MCF 10A (cell line): ENCODE measurements at regions of chr19 and their contacts with region 1.

Region 1: GRCh38 chr19:14890643-14891379 is 4.9 kb upstream of the OR7A17 start:
- DNase-seq: no peak
- H3K4me3 Mint-ChIP-seq: no peak overlapping the region
- H3K27ac Mint-ChIP-seq: no peak overlapping the region
- H3K4me1 Mint-ChIP-seq: peaks cover 8% of the 10 kb centered on the region
- H3K27me3 Mint-ChIP-seq: peaks cover 34% of the 10 kb centered on the region
- CTCF ChIP-seq: no peak

Region 2: GRCh38 chr19:14689598-14690503 is 201.0 kb before region 1 on chr19 and contains the start of gene ZNF333:
- CTCF ChIA-PET with region 1: no interaction called
- POLR2A ChIA-PET with region 1: no interaction called
- intact Hi-C with region 1: loop called (anchors 10 kb)
- DNase-seq: peak; percentile 89
- H3K4me3 Mint-ChIP-seq: peak within 1 kb of the TSS; percentile 94
- H3K27ac Mint-ChIP-seq: peak within 1 kb of the TSS; percentile 99
- H3K4me1 Mint-ChIP-seq: no peaks in the 10 kb centered on the region
- H3K27me3 Mint-ChIP-seq: no peaks in the 10 kb centered on the region
- CTCF ChIP-seq: no peak
- total RNA-seq, gene ZNF333: 15.4 and 17.5 TPM in 2 replicates

Region 3: DNA sequence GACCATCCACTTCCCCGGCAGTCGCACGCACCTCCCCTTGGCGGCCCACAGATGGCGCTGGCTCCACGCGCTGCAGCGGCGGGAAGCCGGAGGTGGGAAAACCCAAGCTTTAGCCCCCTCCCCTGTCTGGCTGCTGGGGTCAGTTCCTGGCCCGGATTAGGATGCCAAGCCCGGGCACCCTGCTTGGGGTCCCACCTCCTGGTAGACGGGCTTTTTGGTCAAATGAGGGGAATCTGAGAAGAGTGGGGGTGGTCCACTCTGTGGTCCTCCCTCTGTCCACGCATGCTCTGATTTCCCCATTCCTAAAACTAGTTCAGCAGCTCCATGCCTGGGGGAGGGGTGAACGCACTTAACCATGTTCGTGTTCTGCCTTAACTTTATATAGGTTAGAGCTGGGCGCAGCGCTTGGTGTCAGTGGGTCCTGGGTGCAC is 104.4 kb before region 1 on chr19:
- CTCF ChIA-PET with region 1: interaction called, 20 read pairs
- POLR2A ChIA-PET with region 1: no interaction called
- intact Hi-C with region 1: loop called (anchors 1 kb)
- DNase-seq: peak; percentile 43
- H3K4me3 Mint-ChIP-seq: no peak overlapping the region
- H3K27ac Mint-ChIP-seq: no peak overlapping the region
- H3K4me1 Mint-ChIP-seq: peaks cover 12% of the 10 kb centered on the region
- H3K27me3 Mint-ChIP-seq: no peaks in the 10 kb centered on the region
- CTCF ChIP-seq: peak; percentile 92

Region 4: GRCh38 chr19:14871619-14872230 is 19.1 kb before region 1 on chr19:
- CTCF ChIA-PET with region 1: interaction called, 6 read pairs
- POLR2A ChIA-PET with region 1: no interaction called
- intact Hi-C with region 1: loop called (anchors 1 kb)
- DNase-seq: peak; percentile 20
- H3K4me3 Mint-ChIP-seq: no peak overlapping the region
- H3K27ac Mint-ChIP-seq: no peak overlapping the region
- H3K4me1 Mint-ChIP-seq: no peaks in the 10 kb centered on the region
- H3K27me3 Mint-ChIP-seq: peaks cover 40% of the 10 kb centered on the region
- CTCF ChIP-seq: peak; percentile 49

Region 5: DNA sequence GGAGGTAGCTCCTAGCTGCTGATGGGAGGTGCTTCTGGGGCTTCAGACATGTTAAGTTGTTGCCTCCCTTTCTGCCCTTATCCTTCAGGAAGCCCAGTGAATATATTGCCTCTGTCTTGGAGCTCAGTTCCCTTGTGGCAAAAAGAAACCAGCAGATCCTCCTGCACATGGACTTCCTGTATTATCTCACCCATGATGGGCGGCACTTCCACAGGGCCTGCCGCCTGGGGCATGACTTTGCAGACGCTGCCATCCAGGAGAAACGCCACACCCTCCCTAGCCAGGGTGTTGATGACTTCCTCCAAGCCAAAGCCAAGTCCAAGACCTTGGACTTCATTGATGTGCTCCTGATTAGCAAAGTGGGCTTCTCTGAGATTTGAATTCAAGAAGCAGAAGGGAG is 776.1 kb after region 1 on chr19:
- CTCF ChIA-PET with region 1: no interaction called
- POLR2A ChIA-PET with region 1: no interaction called
- intact Hi-C with region 1: no loop called
- DNase-seq: no peak
- H3K4me3 Mint-ChIP-seq: no peak overlapping the region
- H3K27ac Mint-ChIP-seq: no peak overlapping the region
- H3K4me1 Mint-ChIP-seq: no peaks in the 10 kb centered on the region
- H3K27me3 Mint-ChIP-seq: no peaks in the 10 kb centered on the region
- CTCF ChIP-seq: no peak